ENCODE measurements at regions of chr9 and their contacts with region 1.

Region 1: GRCh38 chr9:128921881-128922763 is 1.3 kb downstream of the PHYHD1 start:
- DNase-seq: peak; percentile 74 to 86
- ATAC-seq: peak; percentile 74
- H3K4me3 ChIP-seq: peak overlapping the region; percentile 9 to 66
- H3K27ac ChIP-seq: peak overlapping the region; percentile 76 to 85
- H3K4me1 ChIP-seq: no peaks in the 10 kb centered on the region
- H3K27me3 ChIP-seq: no peaks in the 10 kb centered on the region

Region 2: GRCh38 chr9:128881901-128882681 is 40.0 kb before region 1 on chr9 and contains the starts of genes KYAT1 and LRRC8A:
- intact Hi-C with region 1: loop called (anchors 2 to 5 kb)
- DNase-seq: peak; percentile 98 to 99
- ATAC-seq: peak; percentile 93
- H3K4me3 ChIP-seq: peak within 1 kb of the TSS; percentile 84 to 96
- H3K27ac ChIP-seq: peak within 1 kb of the TSS; percentile 80 to 86
- H3K4me1 ChIP-seq: no peaks in the 10 kb centered on the region
- H3K27me3 ChIP-seq: no peaks in the 10 kb centered on the region
- total RNA-seq, gene KYAT1: 7.5 to 9.5 TPM
- total RNA-seq, gene LRRC8A: 63.8 to 100 TPM